ENCODE measurements at regions of chr14 and their contacts with region 1.

Region 1: GRCh38 chr14:65095619-65096205 is 6.6 kb downstream of the MAX start:
- DNase-seq: no peak
- ATAC-seq: no peak
- H3K4me3 ChIP-seq: no peak overlapping the region
- H3K4me3 Mint-ChIP-seq: peak overlapping the region; percentile 54
- H3K27ac ChIP-seq: no peak overlapping the region
- H3K27ac Mint-ChIP-seq: peak overlapping the region; percentile 52
- H3K4me1 ChIP-seq: peaks cover 64% of the 10 kb centered on the region
- H3K4me1 Mint-ChIP-seq: peaks cover 85% of the 10 kb centered on the region
- H3K27me3 ChIP-seq: no peaks in the 10 kb centered on the region
- H3K27me3 Mint-ChIP-seq: no peaks in the 10 kb centered on the region
- CTCF ChIP-seq: no peak

Region 2: DNA sequence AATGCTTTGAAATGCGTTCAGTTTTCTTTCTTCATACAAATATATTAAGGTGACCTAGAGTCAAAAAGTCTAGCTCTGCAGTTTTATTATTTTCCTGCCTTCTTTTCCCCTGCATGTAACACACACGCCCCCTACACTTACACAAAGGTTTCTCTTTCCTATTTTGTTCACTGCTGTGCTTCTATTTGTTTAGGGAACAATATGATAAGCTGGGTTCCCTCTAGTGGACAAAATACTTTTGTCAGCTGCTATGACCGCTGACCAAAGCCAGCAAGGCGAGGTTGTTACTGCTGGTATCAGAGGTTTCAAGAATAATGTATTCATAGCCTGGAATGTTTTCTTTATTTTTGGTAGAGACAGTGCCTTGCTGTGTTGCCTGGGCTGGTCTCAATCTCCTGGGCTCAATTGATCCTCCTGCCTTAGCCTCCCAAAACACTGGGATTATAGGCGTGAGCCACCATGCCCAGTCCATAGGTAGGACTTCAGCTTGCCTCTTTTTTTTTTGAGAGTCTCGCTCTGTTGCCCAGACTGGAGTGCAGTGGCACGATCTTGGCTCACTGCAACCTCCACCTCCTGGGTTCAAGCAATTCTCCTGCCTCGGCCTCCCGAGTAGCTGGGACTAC is 75.7 kb before region 1 on chr14:
- CTCF ChIA-PET with region 1: no interaction called
- POLR2A ChIA-PET with region 1: no interaction called
- intact Hi-C with region 1: no loop called
- DNase-seq: peak in 2 of 9 experiments; percentile 19 to 40
- ATAC-seq: no peak
- H3K4me3 ChIP-seq: no peak overlapping the region
- H3K4me3 Mint-ChIP-seq: no peak overlapping the region
- H3K27ac ChIP-seq: no peak overlapping the region
- H3K27ac Mint-ChIP-seq: no peak overlapping the region
- H3K4me1 ChIP-seq: no peaks in the 10 kb centered on the region
- H3K4me1 Mint-ChIP-seq: no peaks in the 10 kb centered on the region
- H3K27me3 ChIP-seq: no peaks in the 10 kb centered on the region
- H3K27me3 Mint-ChIP-seq: no peaks in the 10 kb centered on the region
- CTCF ChIP-seq: no peak

Region 3: DNA sequence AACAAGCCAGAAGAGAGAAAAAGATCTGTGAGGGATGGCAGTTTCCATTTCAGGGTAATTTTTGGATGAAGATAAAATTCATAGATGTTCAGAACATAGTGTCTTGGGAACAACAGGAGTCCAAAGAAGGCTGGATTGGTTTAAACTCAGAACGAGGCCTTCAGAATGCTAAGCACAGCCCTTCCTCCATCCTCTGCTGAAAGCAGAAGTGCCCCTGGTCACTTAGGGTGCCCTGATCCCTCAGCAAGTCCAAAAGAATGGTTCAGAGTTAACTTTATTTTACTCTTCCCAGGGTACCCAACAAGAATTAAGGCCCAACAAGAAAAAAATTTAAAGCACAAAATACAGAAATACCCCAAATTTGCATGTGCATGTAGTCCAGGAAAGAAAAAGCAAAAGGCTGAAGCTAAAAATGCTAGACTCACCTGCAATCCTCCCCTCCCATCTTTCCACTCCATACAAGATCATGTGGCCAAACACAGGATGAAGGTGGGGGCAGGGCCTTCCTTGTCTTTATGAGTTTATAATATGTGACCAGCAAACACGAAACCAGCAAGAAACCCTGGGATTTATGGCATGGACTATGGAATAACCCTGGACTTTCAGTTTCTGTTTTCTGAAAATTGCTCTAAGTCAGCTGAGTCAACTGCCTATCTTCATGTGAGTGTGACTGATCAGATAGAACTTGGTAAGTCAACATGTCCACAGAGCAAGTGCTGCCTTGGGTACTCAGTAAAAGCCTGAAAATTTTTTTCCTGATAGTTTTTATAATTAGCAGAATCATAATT is 14.6 kb before region 1 on chr14:
- CTCF ChIA-PET with region 1: interaction called, 3 read pairs
- POLR2A ChIA-PET with region 1: interaction called, 3 read pairs
- intact Hi-C with region 1: loop called in 1 of 2 experiments (anchors 2 kb)
- DNase-seq: no peak
- ATAC-seq: no peak
- H3K4me3 ChIP-seq: no peak overlapping the region
- H3K4me3 Mint-ChIP-seq: peak overlapping the region; percentile 2
- H3K27ac ChIP-seq: no peak overlapping the region
- H3K27ac Mint-ChIP-seq: peak overlapping the region; percentile 81
- H3K4me1 ChIP-seq: peaks cover 40% of the 10 kb centered on the region
- H3K4me1 Mint-ChIP-seq: peaks cover 72% of the 10 kb centered on the region
- H3K27me3 ChIP-seq: no peaks in the 10 kb centered on the region
- H3K27me3 Mint-ChIP-seq: no peaks in the 10 kb centered on the region
- CTCF ChIP-seq: no peak

Measured in CD8-positive, alpha-beta T cell (primary cell).